ENCODE measurements at regions of chr6 and their contacts with region 1.

Region 1: DNA sequence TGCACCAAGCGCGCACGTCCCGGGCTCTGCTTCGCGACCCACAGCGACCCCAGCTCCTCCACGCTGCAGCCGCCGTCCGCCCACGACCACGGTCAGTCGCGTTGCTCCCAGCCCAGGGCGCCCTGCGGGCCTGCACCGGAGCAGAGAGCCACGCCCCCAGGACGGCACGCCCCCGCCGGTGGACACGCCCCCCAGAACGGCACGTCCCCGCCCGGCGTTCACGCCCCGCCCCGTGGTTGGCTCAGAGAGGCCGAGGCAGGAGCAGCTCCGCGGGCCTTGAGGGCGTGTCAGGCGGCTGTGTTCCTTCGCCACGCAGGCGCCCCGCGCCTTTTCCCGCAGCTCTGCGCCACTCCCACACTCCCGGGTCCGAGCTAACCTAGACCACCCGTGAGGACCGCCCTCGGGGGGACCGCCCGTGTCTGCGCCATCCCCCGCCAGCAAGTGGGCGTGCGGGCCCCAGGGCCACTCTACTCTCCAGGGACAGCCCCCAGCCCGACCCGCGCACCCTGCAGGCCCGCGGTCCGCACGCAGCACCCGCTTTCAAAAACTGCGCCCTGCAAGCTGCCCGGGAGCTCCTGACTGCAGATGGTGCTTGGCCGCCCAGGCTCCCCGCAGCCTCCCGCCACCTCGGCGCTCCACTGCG is at the start of gene RNASET2:
- DNase-seq: peak; percentile 88
- ATAC-seq: peak; percentile 85
- H3K4me3 ChIP-seq: peak within 1 kb of the TSS; percentile 90 to 99 (median 97)
- H3K27ac ChIP-seq: peak within 1 kb of the TSS; percentile 89
- H3K4me1 ChIP-seq: peaks cover 80% of the 10 kb centered on the region
- H3K27me3 ChIP-seq: no peaks in the 10 kb centered on the region; a peak in 1 of 5 replicates
- CTCF ChIP-seq: peak; percentile 10
- EP300 ChIP-seq: peak in 1 of 2 experiments; percentile 1; a peak in 1 of 4 replicates
- POLR2A ChIP-seq: peak in 1 of 2 experiments; percentile 68; a peak in 2 of 4 replicates
- RAD21 ChIP-seq: peak; percentile 14; the same call in 1 of the 2 replicates
- total RNA-seq, gene RNASET2: 22.4 and 44.6 TPM in 2 replicates

Region 2: DNA sequence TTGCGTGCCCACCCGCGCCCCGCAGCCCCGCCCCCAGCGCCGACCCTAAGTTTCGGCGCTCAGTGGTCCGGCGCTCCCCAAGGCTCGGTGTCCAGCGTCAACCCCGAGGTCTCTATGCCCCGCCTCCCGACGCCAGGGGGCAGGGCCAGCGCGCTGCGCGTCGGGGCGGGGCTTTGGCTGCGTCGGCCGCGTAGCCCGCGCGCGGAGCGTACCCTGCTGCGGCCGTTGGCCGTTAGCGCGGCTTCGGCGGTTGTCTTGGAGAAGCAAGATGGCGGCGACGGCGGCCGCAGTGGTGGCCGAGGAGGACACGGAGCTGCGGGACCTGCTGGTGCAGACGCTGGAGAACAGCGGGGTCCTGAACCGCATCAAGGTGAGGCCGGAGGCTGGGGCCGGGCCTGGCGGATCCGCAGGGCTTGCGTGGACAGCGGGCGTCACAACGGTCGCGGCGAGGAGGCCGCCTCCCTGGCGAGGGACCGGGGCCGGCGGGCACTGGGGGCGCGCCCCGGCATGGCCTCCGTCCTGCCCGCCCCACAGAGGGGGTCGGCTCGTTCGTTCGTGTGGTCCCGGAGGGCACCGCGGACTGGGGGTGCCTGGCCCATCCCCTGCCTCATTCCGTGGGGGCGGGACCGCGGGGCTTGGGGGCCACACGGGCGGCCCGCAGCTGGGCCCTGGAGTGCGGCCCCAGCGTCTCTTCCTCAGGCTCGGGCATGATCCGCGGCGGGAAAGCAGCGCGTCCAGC is 42.7 kb after region 1 on chr6 and contains the start of gene CEP43:
- CTCF ChIA-PET with region 1: no interaction called
- POLR2A ChIA-PET with region 1: interaction called, 14 read pairs
- in situ Hi-C with region 1: no loop called
- intact Hi-C with region 1: loop called (anchors 2 kb)
- DNase-seq: peak; percentile 95
- ATAC-seq: peak; percentile 92
- H3K4me3 ChIP-seq: peak within 1 kb of the TSS; percentile 91 to 99 (median 97)
- H3K27ac ChIP-seq: peak within 1 kb of the TSS; percentile 82
- H3K4me1 ChIP-seq: peaks cover 54% of the 10 kb centered on the region
- H3K27me3 ChIP-seq: no peaks in the 10 kb centered on the region; a peak in 1 of 5 replicates
- CTCF ChIP-seq: peak; percentile 6; the same call in 1 of the 2 replicates
- EP300 ChIP-seq: peak in 1 of 2 experiments; percentile 25; a peak in 1 of 4 replicates
- POLR2A ChIP-seq: peak; percentile 79 to 83; a peak in 3 of 4 replicates
- RAD21 ChIP-seq: peak; percentile 59
- total RNA-seq, gene CEP43: 73.9 and 88.4 TPM in 2 replicates